Dendritic cell treated with granulocyte-macrophage colony-stimulating factor and Interleukin-4, amounts not matched to agents 40 ng/mL and 50 ng/mL, for 4 days (primary cell): ENCODE measurements at regions of chr17 and their contacts with region 1.

Region 1: GRCh38 chr17:77319211-77320043 is 178.7 kb downstream of the SEC14L1 start:
- H3K4me3 Mint-ChIP-seq: peak overlapping the region; percentile 97
- H3K27ac Mint-ChIP-seq: peak overlapping the region; percentile 98
- H3K4me1 Mint-ChIP-seq: peaks cover 89% of the 10 kb centered on the region
- H3K27me3 Mint-ChIP-seq: no peaks in the 10 kb centered on the region

Region 2: GRCh38 chr17:77280980-77281903 is 38.2 kb before region 1 on chr17:
- intact Hi-C with region 1: loop called (anchors 5 kb)
- H3K4me3 Mint-ChIP-seq: peak overlapping the region; percentile 79
- H3K27ac Mint-ChIP-seq: peak overlapping the region; percentile 80
- H3K4me1 Mint-ChIP-seq: peaks cover 81% of the 10 kb centered on the region
- H3K27me3 Mint-ChIP-seq: no peaks in the 10 kb centered on the region

Region 3: DNA sequence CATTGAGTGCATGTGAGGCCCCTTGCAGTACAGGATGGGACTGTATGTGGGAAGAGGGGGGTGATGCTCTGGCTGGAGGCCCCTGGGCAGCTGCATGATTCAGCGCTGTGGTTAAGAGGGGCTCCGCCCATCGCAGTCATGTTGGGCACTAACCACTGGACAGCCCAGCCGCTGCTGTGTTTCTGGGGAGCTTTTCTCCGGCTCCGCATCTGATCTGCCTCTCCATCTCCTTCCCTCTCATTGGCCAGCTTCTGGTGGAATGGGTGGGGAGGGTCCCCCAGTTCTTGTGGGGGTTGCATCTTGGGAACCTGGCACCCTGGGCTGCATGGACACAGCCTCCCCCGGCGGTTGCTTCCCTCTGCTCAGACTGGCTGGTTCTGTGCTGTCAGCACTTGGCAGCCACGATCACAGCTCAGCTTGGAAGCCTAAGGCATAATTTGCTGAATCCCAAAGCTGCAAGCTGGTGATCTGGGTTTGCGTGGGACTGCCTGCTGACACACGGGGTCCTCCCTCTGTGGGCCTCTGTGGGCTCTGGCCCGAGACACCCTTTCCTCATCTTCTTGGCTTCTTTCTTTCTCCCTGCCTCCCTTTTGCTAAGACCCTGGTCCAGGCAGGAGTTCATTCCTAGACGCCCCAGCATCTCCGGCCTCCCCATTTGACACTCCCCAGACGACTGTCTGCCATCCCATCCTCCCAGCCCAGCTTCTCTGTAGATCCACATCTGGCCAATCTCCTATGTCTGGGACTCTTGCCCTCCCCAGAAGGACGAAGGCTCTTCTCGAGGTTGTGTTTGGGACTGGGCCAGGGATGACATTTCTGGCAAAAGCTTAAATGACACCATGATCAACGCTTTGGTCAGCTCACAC is 10.3 kb before region 1 on chr17:
- intact Hi-C with region 1: no loop called
- H3K4me3 Mint-ChIP-seq: peak overlapping the region; percentile 59
- H3K27ac Mint-ChIP-seq: peak overlapping the region; percentile 93
- H3K4me1 Mint-ChIP-seq: peaks cover 90% of the 10 kb centered on the region
- H3K27me3 Mint-ChIP-seq: peaks cover 2% of the 10 kb centered on the region

Region 4: GRCh38 chr17:77404812-77405581 is 85.6 kb after region 1 on chr17:
- intact Hi-C with region 1: loop called (anchors 10 kb)
- H3K4me3 Mint-ChIP-seq: peak overlapping the region; percentile 75
- H3K27ac Mint-ChIP-seq: peak overlapping the region; percentile 72
- H3K4me1 Mint-ChIP-seq: peaks cover 100% of the 10 kb centered on the region
- H3K27me3 Mint-ChIP-seq: no peaks in the 10 kb centered on the region